Cardiac septum (tissue), 1 donor: ENCODE measurements at regions of chr4 and their contacts with region 1.

Region 1: DNA sequence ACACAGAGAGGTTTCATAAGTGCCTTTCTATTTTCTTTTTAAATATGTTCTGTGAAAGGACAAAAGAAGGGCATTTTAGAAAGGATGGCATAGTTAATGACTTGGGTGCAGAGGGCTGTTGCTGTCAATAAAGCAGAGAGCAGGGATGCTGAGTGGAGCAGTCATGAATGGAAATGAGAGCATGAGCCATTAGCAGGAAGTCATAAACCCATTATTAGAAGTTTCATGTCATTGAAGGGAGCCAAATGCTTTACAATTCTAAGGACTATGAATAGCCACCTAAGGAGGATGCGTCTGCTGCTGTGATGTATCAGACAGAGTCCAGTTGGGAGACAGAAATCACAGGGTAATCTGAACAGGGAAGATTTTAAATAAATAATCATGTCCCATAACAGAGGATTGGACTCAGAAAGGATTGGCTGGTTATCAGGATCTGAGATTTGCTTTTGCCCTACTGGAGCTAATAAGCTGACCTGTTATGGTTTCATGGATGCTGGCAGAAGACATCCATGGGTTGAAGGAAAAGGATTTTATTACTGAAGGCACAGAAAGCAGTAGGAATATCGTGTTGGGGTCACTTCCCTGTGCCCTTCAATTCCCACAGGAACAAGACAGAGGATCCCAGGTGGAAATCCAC is 47.5 kb upstream of the WDR19 start:
- DNase-seq: no peak

Region 2: GRCh38 chr4:38768968-38769394 is 365.8 kb before region 1 on chr4:
- intact Hi-C with region 1: loop called (anchors 10 kb)
- DNase-seq: no peak

Region 3: DNA sequence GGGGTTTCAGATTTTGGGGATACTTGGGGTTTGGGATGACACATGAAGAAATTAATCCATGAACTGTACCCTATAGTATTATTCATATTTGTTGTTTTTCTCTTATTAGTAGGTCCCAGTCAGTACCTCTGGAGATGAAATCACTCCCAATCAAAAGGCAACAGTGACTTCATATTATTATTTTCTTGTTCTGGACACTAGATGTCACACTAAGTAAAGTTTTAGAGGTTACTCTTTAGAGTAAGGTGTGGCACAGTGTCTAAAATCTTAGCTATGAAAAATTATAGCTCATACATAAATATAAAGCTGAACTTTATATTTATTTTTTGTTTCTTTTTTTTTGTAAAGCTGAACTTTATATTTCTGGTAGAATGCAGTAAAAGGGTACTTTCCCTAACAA is 232.1 kb before region 1 on chr4:
- intact Hi-C with region 1: loop called (anchors 2 kb)
- DNase-seq: no peak

Region 4: GRCh38 chr4:39410415-39410814 is 275.6 kb after region 1 on chr4:
- intact Hi-C with region 1: no loop called
- DNase-seq: no peak